Activated CD4-positive, alpha-beta T cell treated with anti-CD3 and anti-CD28 coated beads for 36 hours (primary cell): ENCODE measurements at regions of chr15 and their contacts with region 1.

Region 1: GRCh38 chr15:64893481-64894394 is 18.0 kb upstream of the ANKDD1A start:
- DNase-seq: peak; percentile 99
- ATAC-seq: peak; percentile 84
- H3K4me3 Mint-ChIP-seq: peak overlapping the region; percentile 94
- H3K27ac Mint-ChIP-seq: peak overlapping the region; percentile 93
- H3K4me1 Mint-ChIP-seq: peaks cover 54% of the 10 kb centered on the region
- H3K27me3 Mint-ChIP-seq: no peaks in the 10 kb centered on the region

Region 2: DNA sequence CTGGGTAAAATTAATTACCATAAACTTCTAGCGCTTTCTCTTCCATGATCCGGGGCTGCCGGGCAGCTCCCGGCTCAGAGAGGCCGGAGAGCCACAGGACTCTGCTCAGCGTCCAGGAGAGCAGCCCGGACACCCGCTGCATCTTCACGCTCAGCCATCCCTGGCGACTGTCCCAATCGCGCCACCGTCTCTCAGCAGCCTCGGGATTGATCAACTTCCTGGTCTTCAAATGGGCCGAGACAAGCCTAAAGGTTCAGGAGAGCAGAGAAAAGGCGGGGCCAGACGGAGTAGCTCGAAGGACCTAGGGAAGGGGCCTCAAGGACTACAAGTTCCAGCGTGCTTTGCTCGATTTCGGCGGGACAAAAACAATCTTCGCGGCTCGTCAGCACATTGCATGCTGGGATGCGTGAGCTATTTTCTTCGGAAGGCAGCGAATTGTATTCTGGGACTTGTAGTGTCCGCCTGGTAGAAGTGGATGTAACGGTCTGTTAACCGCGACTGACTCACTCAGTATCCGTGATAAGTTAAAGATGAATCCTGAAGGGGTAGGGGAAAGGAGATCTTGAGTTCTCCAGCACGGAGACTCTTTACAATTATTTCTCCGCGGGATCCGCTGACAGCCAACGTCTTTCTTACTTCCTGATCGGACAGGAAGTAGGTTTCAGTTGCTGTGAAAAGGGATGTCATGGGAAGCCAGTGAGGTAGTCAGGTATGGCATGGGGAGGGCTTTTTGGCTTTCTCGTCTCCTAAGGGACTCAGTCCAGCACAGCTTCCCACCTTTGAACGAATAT is 799.9 kb before region 1 on chr15 and contains the start of gene CIAO2A:
- CTCF ChIA-PET with region 1: no interaction called
- POLR2A ChIA-PET with region 1: interaction called, 3 read pairs
- intact Hi-C with region 1: loop called in 1 of 2 experiments (anchors 2 kb)
- DNase-seq: peak; percentile 97
- ATAC-seq: peak; percentile 87
- H3K4me3 Mint-ChIP-seq: peak within 1 kb of the TSS; percentile 91
- H3K27ac Mint-ChIP-seq: peak within 1 kb of the TSS; percentile 96
- H3K4me1 Mint-ChIP-seq: peaks cover 49% of the 10 kb centered on the region
- H3K27me3 Mint-ChIP-seq: no peaks in the 10 kb centered on the region
- total RNA-seq, gene CIAO2A: 95.5 to 111 TPM

Region 3: GRCh38 chr15:64443747-64444621 is 449.8 kb before region 1 on chr15:
- CTCF ChIA-PET with region 1: no interaction called
- POLR2A ChIA-PET with region 1: interaction called, 4 read pairs
- intact Hi-C with region 1: loop called in 1 of 2 experiments (anchors 10 kb)
- DNase-seq: no peak
- ATAC-seq: peak; percentile 90
- H3K4me3 Mint-ChIP-seq: peak overlapping the region; percentile 61
- H3K27ac Mint-ChIP-seq: peak overlapping the region; percentile 93
- H3K4me1 Mint-ChIP-seq: peaks cover 63% of the 10 kb centered on the region
- H3K27me3 Mint-ChIP-seq: no peaks in the 10 kb centered on the region

Region 4: DNA sequence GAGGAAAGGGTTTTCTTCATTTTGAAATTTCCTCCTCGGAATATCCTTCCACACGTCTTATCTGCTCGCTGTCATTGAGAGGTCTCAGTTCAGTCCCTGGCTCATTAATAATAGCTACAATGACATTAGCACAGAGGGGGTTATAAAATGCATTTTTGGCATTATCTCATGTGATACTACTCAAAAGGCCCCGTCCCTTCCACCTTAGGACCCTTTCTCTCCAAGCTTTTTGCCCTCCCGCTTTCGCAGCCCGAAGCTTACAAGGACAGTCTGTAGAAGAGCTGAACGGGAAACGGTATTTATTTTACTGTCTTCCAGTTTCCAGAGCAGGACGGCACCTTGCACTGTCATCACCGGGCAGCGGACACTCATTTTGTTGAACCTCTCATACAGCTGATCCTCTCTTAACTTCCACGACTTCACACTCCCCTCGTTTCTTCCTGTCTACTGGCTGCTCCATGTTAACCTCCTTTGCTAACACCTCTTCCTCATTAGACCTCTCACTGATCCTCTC is 57.7 kb before region 1 on chr15:
- CTCF ChIA-PET with region 1: interaction called, 10 read pairs
- POLR2A ChIA-PET with region 1: interaction called, 15 read pairs
- intact Hi-C with region 1: loop called (anchors 1 to 2 kb)
- DNase-seq: no peak
- ATAC-seq: peak; percentile 4
- H3K4me3 Mint-ChIP-seq: peak overlapping the region; percentile 56
- H3K27ac Mint-ChIP-seq: peak overlapping the region; percentile 30
- H3K4me1 Mint-ChIP-seq: peaks cover 43% of the 10 kb centered on the region
- H3K27me3 Mint-ChIP-seq: no peaks in the 10 kb centered on the region

Region 5: GRCh38 chr15:64989416-64990167 is 95.9 kb after region 1 on chr15 and contains the start of gene SPG21:
- CTCF ChIA-PET with region 1: no interaction called
- POLR2A ChIA-PET with region 1: interaction called, 3 read pairs
- intact Hi-C with region 1: loop called in 1 of 2 experiments (anchors 1 kb)
- DNase-seq: peak; percentile 94
- ATAC-seq: peak; percentile 96
- H3K4me3 Mint-ChIP-seq: peak within 1 kb of the TSS; percentile 96
- H3K27ac Mint-ChIP-seq: peak within 1 kb of the TSS; percentile 88
- H3K4me1 Mint-ChIP-seq: peaks cover 37% of the 10 kb centered on the region
- H3K27me3 Mint-ChIP-seq: no peaks in the 10 kb centered on the region
- total RNA-seq, gene SPG21: 74.1 to 79.1 TPM

Region 6: GRCh38 chr15:65792130-65792987 is 898.6 kb after region 1 on chr15 and contains the start of gene DENND4A:
- CTCF ChIA-PET with region 1: no interaction called
- POLR2A ChIA-PET with region 1: interaction called, 3 read pairs
- intact Hi-C with region 1: loop called in 1 of 2 experiments (anchors 10 kb)
- DNase-seq: peak; percentile 99
- ATAC-seq: peak; percentile 80
- H3K4me3 Mint-ChIP-seq: peak within 1 kb of the TSS; percentile 80
- H3K27ac Mint-ChIP-seq: peak within 1 kb of the TSS; percentile 98
- H3K4me1 Mint-ChIP-seq: peaks cover 60% of the 10 kb centered on the region
- H3K27me3 Mint-ChIP-seq: no peaks in the 10 kb centered on the region
- total RNA-seq, gene DENND4A: 35.6 to 43.5 TPM

Region 7: GRCh38 chr15:65870889-65871533 is 977.3 kb after region 1 on chr15:
- CTCF ChIA-PET with region 1: no interaction called
- POLR2A ChIA-PET with region 1: no interaction called
- intact Hi-C with region 1: no loop called
- DNase-seq: no peak
- ATAC-seq: peak; percentile 30
- H3K4me3 Mint-ChIP-seq: peak overlapping the region; percentile 99
- H3K27ac Mint-ChIP-seq: peak overlapping the region; percentile 91
- H3K4me1 Mint-ChIP-seq: peaks cover 38% of the 10 kb centered on the region
- H3K27me3 Mint-ChIP-seq: no peaks in the 10 kb centered on the region